ENCODE measurements at regions of chr5 and their contacts with region 1.

Region 1: DNA sequence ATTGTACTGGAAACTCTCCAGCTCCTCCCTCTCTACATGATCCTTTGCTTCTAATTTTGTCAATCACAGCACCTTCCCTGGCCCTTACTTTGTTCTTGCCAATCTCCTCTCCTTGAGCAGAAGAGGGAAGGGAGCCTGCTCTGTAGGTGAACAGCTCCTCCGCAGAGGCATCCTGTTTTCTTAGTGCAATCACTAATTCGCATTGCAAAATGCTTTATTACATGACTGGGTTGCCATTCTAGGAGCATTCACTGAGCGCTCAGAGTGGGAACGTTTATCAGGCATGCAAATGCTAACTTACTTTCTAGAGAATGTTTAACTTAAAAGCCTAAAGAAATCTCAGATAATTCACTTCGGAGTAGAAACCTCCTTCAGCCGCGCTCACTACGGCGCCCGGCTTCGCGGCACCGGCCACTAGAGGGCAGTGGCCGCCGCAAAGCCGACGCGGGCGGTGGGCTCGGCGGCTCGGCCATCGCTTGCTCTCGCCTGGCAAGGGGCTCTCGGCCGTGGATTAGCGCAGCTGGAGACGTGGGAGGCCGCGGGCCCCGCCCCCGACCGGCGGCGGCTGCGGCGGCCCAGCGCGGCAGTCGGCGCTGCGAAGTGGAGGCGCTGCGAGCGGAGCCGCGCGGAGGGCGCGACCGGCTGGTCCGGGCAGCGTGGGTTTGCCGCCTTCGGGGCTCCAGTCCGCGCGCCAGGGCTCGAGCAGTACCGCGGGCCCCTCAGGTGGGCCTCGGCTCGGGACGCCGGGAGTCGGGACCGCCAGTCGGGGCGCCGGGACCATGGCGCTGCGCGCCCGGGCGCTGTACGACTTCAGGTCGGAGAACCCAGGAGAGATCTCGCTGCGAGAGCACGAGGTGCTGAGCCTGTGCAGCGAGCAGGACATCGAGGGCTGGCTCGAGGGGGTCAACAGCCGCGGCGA is at the start of gene SNX18:
- DNase-seq: peak; percentile 94 to 96 (median 95)
- ATAC-seq: peak; percentile 82 to 94 (median 92)
- H3K4me3 ChIP-seq: peak within 1 kb of the TSS; percentile 88 to 100 (median 97)
- H3K27ac ChIP-seq: peak within 1 kb of the TSS; percentile 95 to 99 (median 98)
- H3K4me1 ChIP-seq: peaks cover 0 to 45% (median 26%) of the 10 kb centered on the region in 12 donors
- H3K27me3 ChIP-seq: no peaks in the 10 kb centered on the region
- CTCF ChIP-seq: peak; percentile 95 to 100 (median 98)
- POLR2A ChIP-seq: peak in 1 of 2 donors; percentile 78
- total RNA-seq, gene SNX18: 18.8 to 39.6 (median 23.4) TPM

Region 2: DNA sequence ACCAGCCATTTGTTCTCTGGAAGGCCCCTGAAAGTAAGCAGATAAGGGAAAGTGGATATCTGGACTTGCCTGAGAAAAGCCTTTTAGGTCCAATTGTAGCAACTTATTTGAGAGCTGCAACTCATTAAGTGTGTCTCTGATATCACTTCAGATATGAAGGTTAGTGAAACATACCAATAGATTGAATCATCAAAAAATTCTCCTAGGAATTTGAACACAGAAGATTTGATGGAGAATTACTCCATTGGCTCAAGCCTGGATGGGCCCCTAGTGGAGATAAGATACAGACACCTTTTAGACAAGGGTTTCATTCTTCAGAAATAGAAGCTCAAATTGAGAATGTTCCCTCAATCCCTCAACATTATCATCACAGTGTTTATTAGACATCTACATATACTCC is 600.3 kb before region 1 on chr5:
- intact Hi-C with region 1: no loop called
- DNase-seq: no peak
- ATAC-seq: no peak
- H3K4me3 ChIP-seq: no peak overlapping the region
- H3K27ac ChIP-seq: no peak overlapping the region
- H3K4me1 ChIP-seq: peaks cover 0 to 5% (median 0%) of the 10 kb centered on the region in 12 donors
- H3K27me3 ChIP-seq: no peaks in the 10 kb centered on the region
- CTCF ChIP-seq: no peak
- POLR2A ChIP-seq: no peak

Region 3: GRCh38 chr5:54186912-54187445 is 330.5 kb before region 1 on chr5:
- intact Hi-C with region 1: no loop called
- DNase-seq: peak; percentile 12 to 51 (median 36)
- ATAC-seq: peak; percentile 61 to 71 (median 68)
- H3K4me3 ChIP-seq: no peak overlapping the region
- H3K27ac ChIP-seq: no peak overlapping the region
- H3K4me1 ChIP-seq: peaks cover 0 to 41% (median 16%) of the 10 kb centered on the region in 12 donors
- H3K27me3 ChIP-seq: no peaks in the 10 kb centered on the region
- CTCF ChIP-seq: no peak
- POLR2A ChIP-seq: no peak

Region 4: DNA sequence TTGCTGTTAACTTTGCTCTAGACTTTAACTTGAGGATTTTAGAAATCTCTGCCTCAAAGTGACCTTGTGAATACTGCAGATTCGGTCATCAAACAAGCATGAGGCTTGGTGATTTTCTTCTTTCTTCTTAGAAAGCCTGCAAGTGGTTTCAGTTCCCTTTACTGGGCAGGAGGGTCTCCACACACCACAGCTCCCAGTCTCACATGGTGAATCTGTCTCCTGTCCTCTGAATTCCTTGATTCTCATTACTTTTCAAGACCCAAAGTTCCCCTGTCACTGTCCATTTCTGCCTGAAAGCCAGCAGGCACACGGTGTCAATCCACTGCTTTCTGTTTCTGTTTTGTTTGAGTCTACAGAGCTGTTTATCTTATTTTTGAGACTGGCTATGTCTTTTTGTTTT is 47.8 kb before region 1 on chr5:
- intact Hi-C with region 1: no loop called
- DNase-seq: no peak
- ATAC-seq: peak in 2 of 4 donors; percentile 38 to 47
- H3K4me3 ChIP-seq: peak overlapping the region in 9 of 12 donors; percentile 1 to 52 (median 33)
- H3K27ac ChIP-seq: peak overlapping the region in 10 of 12 donors; percentile 25 to 70 (median 52)
- H3K4me1 ChIP-seq: peaks cover 0 to 30% (median 12%) of the 10 kb centered on the region in 12 donors
- H3K27me3 ChIP-seq: no peaks in the 10 kb centered on the region
- CTCF ChIP-seq: no peak
- POLR2A ChIP-seq: no peak

Region 5: GRCh38 chr5:54646356-54647101 is 129.1 kb after region 1 on chr5:
- intact Hi-C with region 1: loop called in 7 of 10 experiments (anchors 5 to 10 kb)
- DNase-seq: peak; percentile 78 to 92 (median 92)
- ATAC-seq: peak; percentile 91 to 97 (median 95)
- H3K4me3 ChIP-seq: peak overlapping the region in 6 of 12 donors; percentile 3 to 29 (median 8)
- H3K27ac ChIP-seq: peak overlapping the region; percentile 65 to 96 (median 76)
- H3K4me1 ChIP-seq: peaks cover 0 to 48% (median 23%) of the 10 kb centered on the region in 12 donors
- H3K27me3 ChIP-seq: no peaks in the 10 kb centered on the region
- CTCF ChIP-seq: peak in 2 of 12 donors; percentile 5 to 10
- POLR2A ChIP-seq: no peak

Region 6: GRCh38 chr5:54703133-54703532 is 185.7 kb after region 1 on chr5:
- intact Hi-C with region 1: loop called in 4 of 10 experiments (anchors 5 to 10 kb)
- DNase-seq: peak in 3 of 5 donors; percentile 53 to 73 (median 65)
- ATAC-seq: peak; percentile 52 to 73 (median 59)
- H3K4me3 ChIP-seq: no peak overlapping the region
- H3K27ac ChIP-seq: peak overlapping the region in 7 of 12 donors; percentile 3 to 67 (median 31)
- H3K4me1 ChIP-seq: peaks cover 0 to 58% (median 36%) of the 10 kb centered on the region in 12 donors
- H3K27me3 ChIP-seq: no peaks in the 10 kb centered on the region
- CTCF ChIP-seq: no peak
- POLR2A ChIP-seq: no peak

Region 7: GRCh38 chr5:54743997-54744788 is 226.8 kb after region 1 on chr5:
- intact Hi-C with region 1: loop called in 5 of 10 experiments (anchors 5 to 10 kb)
- DNase-seq: peak in 1 of 5 donors; percentile 41
- ATAC-seq: peak; percentile 18 to 71 (median 62)
- H3K4me3 ChIP-seq: no peak overlapping the region
- H3K27ac ChIP-seq: peak overlapping the region in 10 of 12 donors; percentile 12 to 92 (median 54)
- H3K4me1 ChIP-seq: peaks cover 0 to 38% (median 18%) of the 10 kb centered on the region in 12 donors
- H3K27me3 ChIP-seq: no peaks in the 10 kb centered on the region
- CTCF ChIP-seq: no peak
- POLR2A ChIP-seq: no peak

Region 8: GRCh38 chr5:54844905-54845566 is 327.6 kb after region 1 on chr5:
- intact Hi-C with region 1: loop called (anchors 1 to 2 kb)
- DNase-seq: no peak
- ATAC-seq: peak in 3 of 4 donors; percentile 34 to 52 (median 36)
- H3K4me3 ChIP-seq: peak overlapping the region in 9 of 12 donors; percentile 2 to 51 (median 28)
- H3K27ac ChIP-seq: peak overlapping the region in 1 of 12 donors; percentile 41
- H3K4me1 ChIP-seq: peaks cover 0 to 11% (median 5%) of the 10 kb centered on the region in 12 donors
- H3K27me3 ChIP-seq: no peaks in the 10 kb centered on the region
- CTCF ChIP-seq: peak; percentile 65 to 79 (median 70)
- POLR2A ChIP-seq: no peak

Region 9: GRCh38 chr5:55146543-55147151 is 629.2 kb after region 1 on chr5:
- intact Hi-C with region 1: loop called in 3 of 10 experiments (anchors 10 kb)
- DNase-seq: peak; percentile 64 to 77 (median 69)
- ATAC-seq: peak; percentile 37 to 89 (median 74)
- H3K4me3 ChIP-seq: no peak overlapping the region
- H3K27ac ChIP-seq: no peak overlapping the region
- H3K4me1 ChIP-seq: peaks cover 0 to 5% (median 0%) of the 10 kb centered on the region in 12 donors
- H3K27me3 ChIP-seq: peaks cover 0 to 19% (median 3%) of the 10 kb centered on the region in 9 donors
- CTCF ChIP-seq: peak; percentile 84 to 97 (median 92)
- POLR2A ChIP-seq: no peak